ENCODE measurements at regions of chr1 and their contacts with region 1.

Region 1: GRCh38 chr1:183227963-183228649 is 42.0 kb downstream of the LAMC2 start:
- DNase-seq: peak; percentile 48 to 71 (median 58)
- ATAC-seq: peak; percentile 96
- H3K4me3 ChIP-seq: no peak overlapping the region
- H3K27ac ChIP-seq: no peak overlapping the region
- H3K4me1 ChIP-seq: no peaks in the 10 kb centered on the region
- H3K27me3 ChIP-seq: peaks cover 0 to 29% of the 10 kb centered on the region in 2 experiments; a peak in 4 of 5 replicates
- CTCF ChIP-seq: peak; percentile 73 to 80 (median 74)
- EP300 ChIP-seq: no peak
- POLR2A ChIP-seq: no peak
- RAD21 ChIP-seq: peak; percentile 37 to 62; a peak in 3 of 4 replicates

Region 2: DNA sequence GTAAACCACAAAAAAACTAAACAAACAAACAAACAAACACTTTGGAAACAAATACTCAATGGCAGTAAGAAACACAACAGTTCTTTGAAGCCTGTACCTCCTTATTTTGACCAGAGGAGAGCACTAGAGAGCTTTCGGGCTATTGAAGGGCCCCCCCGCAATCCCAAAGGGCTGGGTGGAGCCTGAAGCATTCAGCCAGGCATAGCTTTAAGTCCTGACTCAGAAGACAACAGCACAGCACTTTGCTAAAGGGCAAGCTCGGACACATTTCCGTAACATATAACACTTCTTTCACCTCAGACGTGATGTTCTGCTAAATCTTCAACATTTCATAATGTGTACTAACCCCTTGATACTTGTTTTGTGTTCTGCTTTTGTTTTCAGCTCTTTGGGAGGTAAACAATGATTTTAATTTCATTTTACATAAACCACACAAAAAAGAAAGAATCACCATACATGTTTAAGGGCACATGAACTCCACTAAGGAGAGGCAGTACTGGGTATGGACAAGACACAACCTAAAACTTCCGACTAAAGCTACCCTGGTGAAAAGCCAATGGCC is 265.5 kb before region 1 on chr1:
- CTCF ChIA-PET with region 1: interaction called, 5 read pairs
- POLR2A ChIA-PET with region 1: interaction called, 3 read pairs
- in situ Hi-C with region 1: loop called (anchors 25 kb)
- intact Hi-C with region 1: loop called (anchors 2 kb)
- DNase-seq: peak; percentile 86 to 92 (median 90)
- ATAC-seq: peak; percentile 100
- H3K4me3 ChIP-seq: no peak overlapping the region
- H3K27ac ChIP-seq: no peak overlapping the region
- H3K4me1 ChIP-seq: no peaks in the 10 kb centered on the region; a peak in 1 of 5 replicates
- H3K27me3 ChIP-seq: peaks cover 9 to 21% of the 10 kb centered on the region in 2 experiments; a peak in 3 of 5 replicates
- CTCF ChIP-seq: peak; percentile 91 to 98 (median 94)
- EP300 ChIP-seq: peak; percentile 27; the same call in 1 of the 2 replicates
- POLR2A ChIP-seq: no peak
- RAD21 ChIP-seq: peak; percentile 98 to 99

Region 3: DNA sequence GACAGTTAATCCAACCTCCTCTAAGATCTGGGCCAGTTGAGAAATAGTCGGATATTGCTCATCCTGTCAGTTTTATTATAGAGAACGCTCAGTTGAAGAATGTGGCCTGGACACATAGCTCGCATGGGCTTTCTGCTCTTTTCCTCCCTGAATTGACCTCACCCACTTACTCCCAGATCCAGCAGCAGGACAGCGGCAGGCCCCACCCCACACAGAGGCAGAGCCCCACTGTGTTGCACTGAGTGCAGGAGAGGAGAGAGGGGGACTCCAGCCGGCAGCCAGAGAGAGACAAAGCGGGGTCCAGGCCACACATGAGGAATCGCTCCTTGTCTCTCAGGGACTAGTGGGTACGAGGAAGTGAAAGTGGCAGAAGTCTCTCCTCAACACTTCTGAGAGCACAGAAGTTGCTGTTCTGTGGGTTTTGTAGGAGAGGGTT is 126.2 kb before region 1 on chr1:
- CTCF ChIA-PET with region 1: no interaction called
- POLR2A ChIA-PET with region 1: no interaction called
- in situ Hi-C with region 1: no loop called
- intact Hi-C with region 1: no loop called
- DNase-seq: no peak
- ATAC-seq: no peak
- H3K4me3 ChIP-seq: no peak overlapping the region
- H3K27ac ChIP-seq: no peak overlapping the region
- H3K4me1 ChIP-seq: no peaks in the 10 kb centered on the region
- H3K27me3 ChIP-seq: peaks cover 21 to 25% of the 10 kb centered on the region in 2 experiments
- CTCF ChIP-seq: no peak
- EP300 ChIP-seq: no peak
- POLR2A ChIP-seq: no peak
- RAD21 ChIP-seq: no peak

Region 4: GRCh38 chr1:183139281-183139942 is 88.7 kb before region 1 on chr1:
- CTCF ChIA-PET with region 1: no interaction called
- POLR2A ChIA-PET with region 1: no interaction called
- in situ Hi-C with region 1: no loop called
- intact Hi-C with region 1: no loop called
- DNase-seq: no peak
- ATAC-seq: no peak
- H3K4me3 ChIP-seq: no peak overlapping the region
- H3K27ac ChIP-seq: no peak overlapping the region
- H3K4me1 ChIP-seq: no peaks in the 10 kb centered on the region
- H3K27me3 ChIP-seq: peaks cover 8 to 9% of the 10 kb centered on the region in 2 experiments; a peak in 4 of 5 replicates
- CTCF ChIP-seq: no peak
- EP300 ChIP-seq: no peak
- POLR2A ChIP-seq: no peak
- RAD21 ChIP-seq: no peak

Measured in K562 (cell line).